Tibial artery (tissue), 4 donors: ENCODE measurements at regions of chr6 and their contacts with region 1.

Region 1: DNA sequence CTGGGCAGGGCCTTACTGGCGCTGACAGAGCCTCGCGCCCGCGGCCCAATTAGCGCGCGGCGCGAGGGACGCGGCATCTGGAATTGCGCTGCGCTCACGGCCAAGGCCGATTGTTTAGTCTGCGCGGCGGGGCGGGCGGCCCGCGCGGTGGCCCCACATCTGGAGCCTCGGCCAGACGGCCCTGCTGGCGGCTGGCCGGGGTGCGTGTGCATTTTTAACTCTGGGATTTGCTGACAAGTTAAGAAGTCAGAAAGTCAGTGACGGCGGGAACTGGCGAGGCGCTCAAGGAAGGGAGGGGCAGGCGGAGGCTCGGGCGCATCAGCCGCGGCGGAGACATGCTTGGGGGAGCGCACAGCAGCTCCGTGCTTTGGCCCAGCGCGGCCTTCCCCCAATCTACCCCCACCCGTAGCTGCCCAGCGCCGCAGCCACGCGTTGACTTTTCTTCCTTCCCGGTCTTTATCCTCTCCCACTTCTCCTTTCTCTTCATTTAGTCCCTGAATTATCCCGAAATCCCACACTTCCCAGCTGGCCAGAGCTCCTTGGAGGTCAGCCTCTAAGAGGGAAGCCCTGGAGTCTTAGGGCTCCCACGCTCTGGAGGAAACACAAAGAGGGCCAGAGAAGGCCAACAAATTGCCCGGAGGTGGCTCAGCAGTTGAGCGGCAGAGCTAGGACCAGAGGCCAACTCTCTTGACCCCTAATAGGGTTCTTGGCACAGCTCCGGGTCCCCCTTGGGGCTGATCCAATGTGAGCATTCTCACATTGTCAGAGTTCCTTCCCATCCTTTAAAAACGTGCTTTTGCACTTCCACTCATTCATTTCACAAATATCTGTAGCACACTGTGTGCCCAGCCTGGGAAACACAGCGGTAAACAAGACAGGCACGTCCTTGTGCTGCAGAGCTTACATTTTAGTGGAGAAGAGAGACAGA is 40.8 kb upstream of the FOXP4 start:
- DNase-seq: peak; percentile 80 to 95
- H3K4me3 ChIP-seq: peak overlapping the region; percentile 50 to 55
- H3K27ac ChIP-seq: peak overlapping the region; percentile 86 to 95
- H3K4me1 ChIP-seq: peaks cover 5 to 38% (median 29%) of the 10 kb centered on the region in 4 donors
- H3K27me3 ChIP-seq: peaks cover 0 to 7% of the 10 kb centered on the region in 2 donors
- CTCF ChIP-seq: no peak

Region 2: GRCh38 chr6:41424370-41425058 is 80.9 kb before region 1 on chr6:
- intact Hi-C with region 1: loop called (anchors 5 kb)
- DNase-seq: peak; percentile 88 to 92
- H3K4me3 ChIP-seq: no peak overlapping the region
- H3K27ac ChIP-seq: no peak overlapping the region
- H3K4me1 ChIP-seq: peaks cover 0 to 39% (median 33%) of the 10 kb centered on the region in 4 donors
- H3K27me3 ChIP-seq: no peaks in the 10 kb centered on the region
- CTCF ChIP-seq: peak; percentile 83 to 88

Region 3: GRCh38 chr6:41470331-41471063 is 34.9 kb before region 1 on chr6:
- intact Hi-C with region 1: loop called (anchors 2 kb)
- DNase-seq: peak; percentile 77 to 94
- H3K4me3 ChIP-seq: peak overlapping the region; percentile 6 to 41
- H3K27ac ChIP-seq: peak overlapping the region; percentile 58 to 69
- H3K4me1 ChIP-seq: peaks cover 3 to 39% (median 20%) of the 10 kb centered on the region in 4 donors
- H3K27me3 ChIP-seq: peaks cover 0 to 2% of the 10 kb centered on the region in 2 donors
- CTCF ChIP-seq: no peak

Region 4: DNA sequence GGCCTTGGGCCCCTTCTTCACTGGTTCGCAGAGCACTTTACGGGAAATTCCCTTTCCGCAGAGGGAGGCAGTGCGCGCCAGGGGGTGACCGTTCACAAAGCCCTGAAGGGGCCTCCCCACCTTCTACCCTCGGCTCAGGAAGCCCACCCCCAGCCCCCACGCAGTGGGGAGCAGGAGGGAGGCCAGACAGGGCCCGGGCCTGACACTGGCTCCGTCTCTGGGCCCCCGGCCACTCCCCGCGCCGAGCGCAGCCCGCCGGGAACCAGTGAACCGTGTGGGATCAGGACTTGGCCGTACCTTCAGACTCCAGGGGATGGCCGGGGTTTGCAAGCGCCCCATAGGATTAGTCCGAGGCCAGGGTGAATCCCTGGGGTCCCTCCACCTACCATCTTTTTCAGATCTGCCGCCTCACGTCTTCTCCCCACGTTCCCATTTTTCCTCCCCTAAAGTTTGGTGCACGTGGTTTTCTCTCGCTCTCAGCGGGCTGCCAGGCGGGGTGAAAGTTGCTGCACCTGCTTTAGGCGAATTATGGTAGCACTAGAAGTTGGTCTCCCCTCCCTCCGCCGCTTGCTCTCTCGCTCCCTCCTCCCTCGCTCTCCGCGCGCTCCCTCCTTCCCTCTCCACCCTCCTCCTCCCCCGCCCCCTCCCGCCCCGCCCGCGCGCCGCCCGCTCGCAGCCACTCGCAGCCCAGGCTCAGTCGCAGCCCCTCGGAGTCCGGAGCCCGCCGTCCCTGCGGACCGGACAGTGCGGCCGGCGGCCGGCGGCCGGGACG is 40.5 kb after region 1 on chr6 and contains the start of gene FOXP4:
- intact Hi-C with region 1: loop called (anchors 2 kb)
- DNase-seq: peak; percentile 94 to 96
- H3K4me3 ChIP-seq: peak within 1 kb of the TSS; percentile 97 to 98
- H3K27ac ChIP-seq: peak within 1 kb of the TSS; percentile 88 to 90
- H3K4me1 ChIP-seq: peaks cover 7 to 46% (median 34%) of the 10 kb centered on the region in 4 donors
- H3K27me3 ChIP-seq: no peaks in the 10 kb centered on the region
- CTCF ChIP-seq: no peak